HCT116 (cell line): ENCODE measurements at regions of chr1 and their contacts with region 1.

Region 1: GRCh38 chr1:205255941-205256780 is 28.4 kb downstream of the TMCC2 start:
- DNase-seq: peak; percentile 69
- ATAC-seq: peak; percentile 92
- H3K4me3 ChIP-seq: no peak overlapping the region
- H3K27ac ChIP-seq: no peak overlapping the region
- H3K4me1 ChIP-seq: peaks cover 17 to 36% of the 10 kb centered on the region in 2 experiments
- H3K27me3 ChIP-seq: no peaks in the 10 kb centered on the region
- CTCF ChIP-seq: peak; percentile 88 to 96 (median 95)
- POLR2A ChIP-seq: no peak
- RAD21 ChIP-seq: peak; percentile 99

Region 2: DNA sequence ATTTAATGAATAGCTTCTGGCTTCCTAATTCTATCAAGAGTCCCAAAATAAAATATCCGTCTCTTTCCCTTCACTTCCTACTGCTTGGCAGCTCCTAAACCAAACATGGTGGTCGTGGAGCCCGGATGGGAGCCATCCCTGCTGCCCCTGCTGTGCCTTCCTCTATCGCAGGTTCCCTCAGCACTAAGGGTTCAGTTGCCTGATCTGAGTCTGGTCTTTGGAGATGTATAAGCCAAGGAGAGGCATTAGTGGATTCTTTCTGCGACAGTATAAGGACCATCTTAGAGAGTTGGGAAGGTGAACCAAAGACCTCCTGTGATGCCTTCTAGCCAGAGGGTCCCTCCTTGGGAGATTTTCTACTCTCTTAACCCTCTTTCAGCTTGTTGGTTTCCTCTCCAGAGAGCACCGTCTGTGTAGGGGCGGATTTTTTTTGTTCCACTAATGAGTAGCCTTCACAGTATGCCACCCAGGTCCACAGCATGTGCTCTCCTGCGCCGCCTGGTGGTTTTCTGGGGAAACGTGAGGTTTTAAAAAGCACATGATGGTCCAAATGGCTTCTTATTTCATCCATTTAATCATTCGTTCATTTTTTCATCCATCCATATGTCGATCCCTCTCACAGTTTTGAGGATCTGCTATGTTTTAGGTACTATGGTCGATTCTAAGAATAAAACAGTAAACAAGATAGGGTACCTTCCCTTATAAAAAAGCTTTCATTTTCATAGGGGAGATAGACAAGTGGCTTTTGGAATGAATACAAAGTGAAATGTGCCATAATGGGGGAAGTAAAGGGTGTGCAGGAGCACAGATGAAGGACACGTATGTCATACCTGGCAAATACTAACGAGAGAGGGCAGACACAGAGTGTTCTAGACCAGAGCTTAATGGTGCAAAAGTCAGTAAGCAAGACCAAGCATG is 314.5 kb before region 1 on chr1:
- CTCF ChIA-PET with region 1: interaction called, 10 read pairs
- POLR2A ChIA-PET with region 1: no interaction called
- RAD21 ChIA-PET with region 1: no interaction called
- intact Hi-C with region 1: no loop called
- DNase-seq: peak; percentile 34
- ATAC-seq: peak; percentile 93
- H3K4me3 ChIP-seq: no peak overlapping the region
- H3K27ac ChIP-seq: no peak overlapping the region
- H3K4me1 ChIP-seq: no peaks in the 10 kb centered on the region
- H3K27me3 ChIP-seq: peaks cover 18% of the 10 kb centered on the region; the same call in 1 of the 2 replicates
- CTCF ChIP-seq: peak; percentile 87 to 95 (median 95)
- POLR2A ChIP-seq: no peak
- RAD21 ChIP-seq: peak; percentile 76

Region 3: GRCh38 chr1:204989266-204990058 is 266.7 kb before region 1 on chr1:
- CTCF ChIA-PET with region 1: interaction called, 41 read pairs
- POLR2A ChIA-PET with region 1: no interaction called
- RAD21 ChIA-PET with region 1: interaction called, 7 to 8 read pairs
- intact Hi-C with region 1: loop called (anchors 1 kb)
- DNase-seq: peak; percentile 45
- ATAC-seq: peak; percentile 98
- H3K4me3 ChIP-seq: no peak overlapping the region
- H3K27ac ChIP-seq: no peak overlapping the region
- H3K4me1 ChIP-seq: no peaks in the 10 kb centered on the region
- H3K27me3 ChIP-seq: peaks cover 16% of the 10 kb centered on the region; the same call in 1 of the 2 replicates
- CTCF ChIP-seq: peak; percentile 96 to 99 (median 99)
- POLR2A ChIP-seq: no peak
- RAD21 ChIP-seq: peak; percentile 98

Region 4: GRCh38 chr1:205041998-205042910 is 213.9 kb before region 1 on chr1:
- CTCF ChIA-PET with region 1: no interaction called
- POLR2A ChIA-PET with region 1: no interaction called
- RAD21 ChIA-PET with region 1: no interaction called
- intact Hi-C with region 1: no loop called
- DNase-seq: no peak
- ATAC-seq: no peak
- H3K4me3 ChIP-seq: no peak overlapping the region
- H3K27ac ChIP-seq: no peak overlapping the region
- H3K4me1 ChIP-seq: no peaks in the 10 kb centered on the region
- H3K27me3 ChIP-seq: peaks cover 29% of the 10 kb centered on the region; the same call in 1 of the 2 replicates
- CTCF ChIP-seq: no peak
- POLR2A ChIP-seq: no peak
- RAD21 ChIP-seq: no peak

Region 5: GRCh38 chr1:205121660-205122488 is 134.3 kb before region 1 on chr1 and contains the start of gene RBBP5:
- CTCF ChIA-PET with region 1: interaction called, 8 read pairs
- POLR2A ChIA-PET with region 1: no interaction called
- RAD21 ChIA-PET with region 1: no interaction called
- intact Hi-C with region 1: loop called (anchors 1 kb)
- DNase-seq: peak; percentile 97
- ATAC-seq: peak; percentile 99
- H3K4me3 ChIP-seq: peak within 1 kb of the TSS; percentile 90 to 98
- H3K27ac ChIP-seq: peak within 1 kb of the TSS; percentile 70
- H3K4me1 ChIP-seq: peaks cover 7 to 22% of the 10 kb centered on the region in 2 experiments; a peak in 3 of 4 replicates
- H3K27me3 ChIP-seq: no peaks in the 10 kb centered on the region
- CTCF ChIP-seq: peak; percentile 72 to 96 (median 72)
- POLR2A ChIP-seq: peak; percentile 84
- RAD21 ChIP-seq: peak; percentile 48
- total RNA-seq, gene RBBP5: 24.5 TPM

Region 6: DNA sequence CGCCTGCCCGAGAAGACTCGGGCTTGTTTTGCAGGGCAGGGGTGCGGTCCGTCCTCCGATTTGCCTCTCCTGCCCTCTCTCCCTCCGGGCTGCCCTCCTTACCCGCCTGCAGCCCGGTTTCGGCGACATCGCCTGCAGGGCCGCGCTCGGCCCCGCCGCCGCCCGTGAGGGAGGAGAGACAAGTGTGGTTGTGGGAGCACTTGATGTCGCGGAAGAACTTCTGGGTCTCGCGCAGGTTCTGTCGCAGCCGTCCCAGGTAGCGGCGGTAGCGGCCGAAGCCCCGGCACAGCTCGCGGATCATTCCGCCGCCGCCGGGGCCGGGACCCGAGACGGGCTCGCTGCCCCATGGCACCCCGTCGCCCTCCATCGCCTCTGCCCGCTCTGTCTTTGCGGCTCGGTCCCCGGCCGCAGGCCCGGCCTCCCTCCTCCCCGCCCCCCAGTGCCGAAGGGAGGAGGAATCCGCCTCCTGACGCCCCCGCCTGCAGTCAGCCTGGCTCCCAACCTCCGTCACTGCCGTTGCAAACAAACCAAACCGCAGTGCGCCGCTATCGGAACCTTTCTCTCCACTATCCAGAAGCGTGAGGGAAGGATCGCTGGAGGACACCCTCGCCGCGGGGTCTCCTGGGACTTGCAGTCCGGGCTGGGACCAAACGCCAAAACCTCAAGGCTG is 44.9 kb before region 1 on chr1 and contains the start of gene DSTYK:
- CTCF ChIA-PET with region 1: no interaction called
- POLR2A ChIA-PET with region 1: no interaction called
- RAD21 ChIA-PET with region 1: no interaction called
- intact Hi-C with region 1: loop called (anchors 5 kb)
- DNase-seq: peak; percentile 92
- ATAC-seq: peak; percentile 91
- H3K4me3 ChIP-seq: peak within 1 kb of the TSS; percentile 74 to 99
- H3K27ac ChIP-seq: peak within 1 kb of the TSS; percentile 74
- H3K4me1 ChIP-seq: peaks cover 2 to 16% of the 10 kb centered on the region in 2 experiments; a peak in 2 of 4 replicates
- H3K27me3 ChIP-seq: no peaks in the 10 kb centered on the region
- CTCF ChIP-seq: no peak
- POLR2A ChIP-seq: peak; percentile 86
- RAD21 ChIP-seq: peak; percentile 40
- total RNA-seq, gene DSTYK: 6.6 TPM

Region 7: GRCh38 chr1:205273551-205273982 is 17.4 kb after region 1 on chr1:
- CTCF ChIA-PET with region 1: interaction called, 17 read pairs
- POLR2A ChIA-PET with region 1: interaction called, 5 read pairs
- RAD21 ChIA-PET with region 1: interaction called in 1 of 2 experiments, 4 read pairs
- intact Hi-C with region 1: no loop called
- DNase-seq: peak; percentile 48
- ATAC-seq: peak; percentile 79
- H3K4me3 ChIP-seq: no peak overlapping the region
- H3K27ac ChIP-seq: no peak overlapping the region
- H3K4me1 ChIP-seq: peaks cover 17 to 34% of the 10 kb centered on the region in 2 experiments
- H3K27me3 ChIP-seq: no peaks in the 10 kb centered on the region
- CTCF ChIP-seq: peak; percentile 97 to 99 (median 98)
- POLR2A ChIP-seq: no peak
- RAD21 ChIP-seq: peak; percentile 100

Region 8: DNA sequence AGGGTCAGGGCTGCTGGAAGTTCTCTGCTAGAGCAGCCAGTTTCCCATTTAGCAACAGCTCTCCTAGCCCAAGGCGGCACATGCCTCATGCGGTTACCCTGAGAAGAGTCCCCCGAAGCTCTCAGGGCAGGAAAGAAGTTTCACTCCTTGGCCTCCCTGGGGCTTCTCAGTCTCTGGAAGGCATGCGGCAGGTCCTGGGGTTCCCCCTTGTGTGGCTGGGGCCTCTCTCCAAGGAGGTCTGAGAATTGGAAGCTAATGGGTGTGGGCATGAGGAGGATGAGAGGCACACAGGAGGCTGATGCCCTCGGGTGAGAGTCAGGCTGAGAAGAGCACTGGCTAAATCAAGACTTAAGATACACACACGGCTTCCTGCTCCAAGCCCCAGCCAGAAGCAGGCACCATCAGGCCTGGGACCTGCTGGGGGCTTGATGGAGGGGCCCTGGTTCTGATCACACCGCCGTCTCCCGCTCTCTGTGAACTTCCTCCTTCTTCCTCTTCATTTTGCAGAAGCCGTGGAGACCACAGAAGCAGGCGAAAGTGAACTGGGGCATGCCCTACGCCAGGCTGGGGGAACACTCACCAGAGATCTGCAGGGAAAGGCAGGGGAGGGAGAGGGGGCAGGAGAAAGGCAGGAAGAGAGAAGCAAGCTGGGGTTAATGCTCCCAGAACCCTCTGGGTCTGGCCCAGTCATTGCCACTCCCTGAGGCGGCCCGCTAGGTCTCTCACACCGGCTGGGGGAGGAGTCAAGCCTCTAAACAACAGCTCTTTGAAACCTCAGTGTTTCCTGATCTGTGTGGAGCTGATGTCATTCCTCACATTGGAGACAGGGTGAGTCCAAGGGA is 184.5 kb after region 1 on chr1:
- CTCF ChIA-PET with region 1: no interaction called
- POLR2A ChIA-PET with region 1: no interaction called
- RAD21 ChIA-PET with region 1: no interaction called
- intact Hi-C with region 1: no loop called
- DNase-seq: peak; percentile 85
- ATAC-seq: peak; percentile 86
- H3K4me3 ChIP-seq: peak overlapping the region in 1 of 2 experiments; percentile 21; a peak in 1 of 4 replicates
- H3K27ac ChIP-seq: peak overlapping the region; percentile 80
- H3K4me1 ChIP-seq: peaks cover 54 to 76% of the 10 kb centered on the region in 2 experiments
- H3K27me3 ChIP-seq: no peaks in the 10 kb centered on the region
- CTCF ChIP-seq: no peak
- POLR2A ChIP-seq: no peak
- RAD21 ChIP-seq: no peak